Left lung (tissue), 14 donors: ENCODE measurements at regions of chr3 and their contacts with region 1.

Region 1: DNA sequence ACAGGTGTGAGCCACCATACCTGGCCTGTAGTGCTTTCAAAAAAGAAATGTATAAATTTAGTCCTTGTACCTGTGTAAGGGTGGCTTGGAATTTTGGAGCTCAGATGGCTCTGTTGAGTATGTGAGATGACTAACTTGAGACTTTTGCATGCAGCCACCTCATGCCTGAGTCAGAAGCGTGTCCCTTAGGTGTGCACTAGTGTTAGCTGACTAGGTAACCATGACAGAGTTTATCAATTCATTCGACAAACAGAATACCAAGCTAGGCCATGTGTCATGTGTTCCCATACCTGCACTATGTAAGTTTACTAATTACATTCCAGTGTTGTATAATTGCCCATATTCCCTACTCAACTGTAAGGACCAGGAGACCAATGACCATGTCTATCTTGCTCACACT is 4.0 kb upstream of the ZNF639 start:
- DNase-seq: no peak
- ATAC-seq: no peak
- H3K4me3 ChIP-seq: no peak overlapping the region
- H3K27ac ChIP-seq: no peak overlapping the region
- H3K4me1 ChIP-seq: peaks cover 0 to 18% of the 10 kb centered on the region in 2 donors
- H3K27me3 ChIP-seq: no peaks in the 10 kb centered on the region
- CTCF ChIP-seq: no peak

Region 2: DNA sequence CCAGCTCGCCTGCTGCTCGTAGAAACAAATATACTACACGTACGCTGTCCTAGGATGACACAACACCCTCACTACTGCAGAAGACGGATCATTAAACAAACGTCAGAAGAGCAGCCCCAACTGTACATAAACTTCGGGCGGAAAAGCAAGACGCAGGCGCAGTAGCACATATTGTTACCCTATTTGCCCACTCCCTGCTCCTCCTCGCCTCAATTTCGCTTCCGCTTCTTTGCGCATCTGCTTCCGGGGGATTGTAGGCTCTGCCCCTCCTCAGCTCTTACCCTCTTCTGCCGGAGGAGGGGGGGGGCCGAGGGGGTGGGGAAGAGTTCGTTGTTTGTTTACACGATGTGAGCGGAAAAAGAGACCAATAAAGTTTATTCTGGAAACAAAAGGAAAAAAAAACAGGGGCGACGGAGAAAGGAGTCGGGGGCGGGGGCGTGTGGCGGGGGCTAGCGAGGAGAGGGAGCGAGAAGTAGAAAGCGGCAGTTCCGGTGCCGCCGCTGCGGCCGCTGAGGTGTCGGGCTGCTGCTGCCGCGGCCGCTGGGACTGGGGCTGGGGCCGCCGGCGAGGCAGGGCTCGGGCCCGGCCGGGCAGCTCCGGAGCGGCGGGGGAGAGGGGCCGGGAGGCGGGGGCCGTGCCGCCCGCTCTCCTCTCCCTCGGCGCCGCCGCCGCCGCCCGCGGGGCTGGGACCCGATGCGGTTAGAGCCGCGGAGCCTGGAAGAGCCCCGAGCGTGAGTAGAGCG is 170.8 kb before region 1 on chr3 and contains the start of gene PIK3CA:
- intact Hi-C with region 1: loop called in 1 of 2 experiments (anchors 5 kb)
- DNase-seq: peak; percentile 93 to 99 (median 96)
- ATAC-seq: peak; percentile 91
- H3K4me3 ChIP-seq: peak within 1 kb of the TSS; percentile 91 to 96
- H3K27ac ChIP-seq: peak within 1 kb of the TSS; percentile 99
- H3K4me1 ChIP-seq: peaks cover 0 to 36% of the 10 kb centered on the region in 2 donors
- H3K27me3 ChIP-seq: no peaks in the 10 kb centered on the region
- CTCF ChIP-seq: no peak
- polyA plus RNA-seq, gene PIK3CA: 27.3 to 39.8 (median 35.4) TPM